ENCODE measurements at regions of chr1 and their contacts with region 1.

Region 1: DNA sequence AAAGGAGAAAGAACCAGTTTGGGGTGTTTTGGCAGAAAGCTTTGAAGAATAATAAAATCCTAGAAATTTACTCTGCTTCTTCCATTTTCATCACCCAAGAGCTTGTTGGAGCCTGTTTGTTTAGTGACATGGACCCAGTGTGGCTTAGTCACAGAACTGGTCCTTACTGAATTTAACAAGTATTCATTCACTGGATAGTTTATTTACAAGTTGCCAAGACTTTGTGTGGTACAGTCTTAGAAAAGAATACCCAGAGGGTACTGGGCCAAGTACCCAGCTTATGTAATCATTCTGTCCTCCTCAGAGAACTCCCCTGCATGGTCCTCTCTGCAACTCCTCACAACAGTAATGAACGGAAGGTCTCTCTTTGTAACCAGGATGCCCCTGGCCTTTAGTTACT is 16.4 kb downstream of the RAB4A start:
- DNase-seq: no peak
- H3K4me3 Mint-ChIP-seq: no peak overlapping the region
- H3K27ac Mint-ChIP-seq: no peak overlapping the region
- H3K4me1 Mint-ChIP-seq: peaks cover 42% of the 10 kb centered on the region
- H3K27me3 Mint-ChIP-seq: no peaks in the 10 kb centered on the region

Region 2: DNA sequence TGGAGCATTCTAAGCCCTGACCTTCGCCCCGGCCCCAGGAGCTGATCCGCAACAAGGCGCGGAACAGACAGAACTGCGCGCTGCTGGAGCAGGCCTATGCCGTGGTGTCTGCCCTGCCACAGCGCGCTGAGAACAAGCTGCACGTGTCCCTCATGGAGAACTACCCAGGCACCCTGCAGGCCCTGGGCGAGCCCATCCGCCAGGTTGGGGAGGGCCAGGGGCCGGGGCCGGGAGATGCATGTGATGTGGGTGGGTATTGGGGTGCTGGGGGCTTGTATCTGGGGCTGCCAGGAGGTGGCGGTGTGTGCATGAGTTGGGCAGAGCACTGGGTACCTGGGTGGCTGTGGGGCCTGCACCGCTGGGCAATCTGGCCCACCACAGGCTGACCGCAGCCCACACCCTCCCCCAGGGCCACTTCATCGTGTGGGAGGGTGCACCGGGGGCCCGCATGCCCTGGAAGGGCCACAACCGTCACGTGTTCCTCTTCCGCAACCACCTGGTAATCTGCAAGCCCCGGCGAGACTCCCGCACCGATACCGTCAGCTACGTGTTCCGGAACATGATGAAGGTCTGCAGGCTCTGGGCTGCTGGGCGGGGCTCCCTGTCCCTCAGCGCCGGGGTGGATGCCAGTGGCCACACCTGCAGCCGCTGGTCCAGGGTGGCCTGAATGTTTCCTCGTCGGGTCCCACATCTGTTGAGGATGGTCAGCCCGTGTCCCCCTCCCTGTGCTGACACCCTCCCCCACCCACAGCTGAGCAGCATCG is 946.4 kb before region 1 on chr1:
- intact Hi-C with region 1: no loop called
- DNase-seq: no peak
- H3K4me3 Mint-ChIP-seq: no peak overlapping the region
- H3K27ac Mint-ChIP-seq: no peak overlapping the region
- H3K4me1 Mint-ChIP-seq: no peaks in the 10 kb centered on the region
- H3K27me3 Mint-ChIP-seq: no peaks in the 10 kb centered on the region

Region 3: DNA sequence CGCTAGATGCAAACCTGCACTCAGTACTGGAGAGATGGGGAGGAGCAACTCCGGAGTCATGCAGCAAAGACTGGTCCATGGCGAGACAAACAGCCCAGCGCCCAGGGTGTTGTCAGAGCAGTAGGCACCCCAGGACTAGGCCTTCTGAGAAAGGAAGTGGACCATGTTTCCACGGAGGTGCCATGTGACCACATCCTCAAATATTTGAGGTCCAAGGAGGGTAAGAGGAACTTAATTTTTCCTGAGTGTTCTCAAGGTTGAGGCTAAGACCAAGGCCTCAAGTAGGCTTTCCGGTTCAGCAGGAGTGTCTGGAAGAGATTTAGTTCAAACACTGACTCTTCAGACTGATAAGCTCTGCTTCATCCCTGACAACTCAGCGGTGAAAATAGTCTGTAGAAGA is 365.8 kb before region 1 on chr1:
- intact Hi-C with region 1: no loop called
- DNase-seq: no peak
- H3K4me3 Mint-ChIP-seq: no peak overlapping the region
- H3K27ac Mint-ChIP-seq: no peak overlapping the region
- H3K4me1 Mint-ChIP-seq: no peaks in the 10 kb centered on the region
- H3K27me3 Mint-ChIP-seq: peaks cover 14% of the 10 kb centered on the region

Region 4: DNA sequence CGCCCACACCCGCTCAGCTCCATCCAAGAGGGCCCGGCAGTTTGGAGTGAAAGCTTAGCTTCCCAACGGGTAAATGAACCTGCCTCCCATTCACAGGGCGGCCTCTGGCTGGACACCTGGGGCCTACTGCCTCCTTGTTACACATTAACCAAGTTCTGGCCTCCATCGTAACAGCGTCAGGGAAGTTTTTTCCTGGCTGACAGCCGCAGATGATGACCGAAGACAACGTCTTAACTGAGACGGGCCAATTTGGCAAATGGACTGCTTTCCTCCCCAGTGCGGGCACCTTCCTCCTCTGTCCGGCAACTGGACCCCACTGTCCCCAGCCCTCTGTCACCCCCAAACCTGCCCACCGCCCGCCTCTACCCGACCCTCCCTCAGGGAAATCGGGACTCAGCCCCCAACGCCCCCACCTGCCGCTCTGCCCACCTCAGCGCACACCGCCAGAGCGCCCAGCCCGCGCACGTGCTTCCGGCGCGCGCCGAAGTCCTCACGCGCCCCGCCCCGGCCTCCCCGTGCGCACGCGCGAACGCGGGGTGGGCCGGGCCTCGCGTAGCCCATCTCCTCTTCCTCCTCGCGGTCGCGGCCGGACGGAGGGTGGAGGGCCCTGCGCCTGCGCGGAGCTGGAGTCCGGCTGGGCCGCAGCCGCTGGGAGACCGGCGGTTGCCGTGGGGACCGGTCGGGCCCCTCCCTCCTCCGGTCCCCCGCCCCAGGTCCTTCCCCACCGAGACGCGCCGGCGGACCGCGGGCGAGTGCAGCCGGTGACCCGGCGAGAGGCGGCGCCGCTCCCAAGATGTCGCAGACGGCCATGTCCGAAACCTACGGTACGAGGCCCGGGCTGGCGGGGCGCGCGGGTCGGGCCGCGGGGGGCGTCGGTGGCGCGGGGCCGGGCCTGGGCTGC is 16.5 kb before region 1 on chr1 and contains the start of gene RAB4A:
- intact Hi-C with region 1: loop called (anchors 2 kb)
- DNase-seq: peak; percentile 76
- H3K4me3 Mint-ChIP-seq: peak within 1 kb of the TSS; percentile 91
- H3K27ac Mint-ChIP-seq: peak within 1 kb of the TSS; percentile 65
- H3K4me1 Mint-ChIP-seq: peaks cover 30% of the 10 kb centered on the region
- H3K27me3 Mint-ChIP-seq: peaks cover 2% of the 10 kb centered on the region
- total RNA-seq, gene RAB4A: 25.7 and 30.7 TPM in 2 replicates

Region 5: DNA sequence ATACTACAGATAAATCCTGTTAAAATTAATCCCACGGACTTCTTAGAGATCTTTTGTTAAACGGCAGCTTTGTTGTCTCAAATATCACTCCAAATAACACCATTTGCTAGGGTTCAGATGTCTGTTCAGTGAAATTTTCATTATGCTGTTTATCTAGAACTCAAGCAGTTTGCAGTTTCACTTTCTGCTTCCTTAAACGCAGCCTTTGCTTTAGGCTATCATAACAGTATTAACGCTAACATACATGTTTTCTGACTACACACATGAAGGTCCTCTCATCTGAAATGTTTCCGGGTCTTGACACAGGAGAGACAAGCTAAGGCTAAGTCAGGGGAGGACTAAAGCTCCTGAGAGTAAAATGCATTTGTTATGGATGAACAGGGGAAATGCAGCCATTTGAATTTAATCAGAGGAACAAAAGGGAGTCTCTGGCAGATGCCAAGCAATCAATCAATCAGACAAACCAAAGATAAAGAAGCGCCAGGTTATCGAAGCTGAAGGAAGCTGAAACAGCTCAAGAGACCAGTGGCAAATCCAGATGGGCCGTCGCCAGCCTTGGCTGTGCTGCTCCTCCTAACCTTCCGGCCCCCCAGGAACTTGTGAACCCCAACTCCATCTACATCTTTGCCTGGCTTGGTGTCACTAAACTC is 38.7 kb after region 1 on chr1:
- intact Hi-C with region 1: loop called (anchors 5 kb)
- DNase-seq: no peak
- H3K4me3 Mint-ChIP-seq: peak overlapping the region; percentile 49
- H3K27ac Mint-ChIP-seq: peak overlapping the region; percentile 81
- H3K4me1 Mint-ChIP-seq: peaks cover 35% of the 10 kb centered on the region
- H3K27me3 Mint-ChIP-seq: no peaks in the 10 kb centered on the region

Region 6: GRCh38 chr1:229440851-229441537 is 153.7 kb after region 1 on chr1:
- intact Hi-C with region 1: loop called (anchors 2 kb)
- DNase-seq: peak; percentile 28
- H3K4me3 Mint-ChIP-seq: no peak overlapping the region
- H3K27ac Mint-ChIP-seq: peak overlapping the region; percentile 53
- H3K4me1 Mint-ChIP-seq: peaks cover 22% of the 10 kb centered on the region
- H3K27me3 Mint-ChIP-seq: peaks cover 22% of the 10 kb centered on the region